Transverse colon (tissue), 4 donors: ENCODE measurements at regions of chr11 and their contacts with region 1.

Region 1: DNA sequence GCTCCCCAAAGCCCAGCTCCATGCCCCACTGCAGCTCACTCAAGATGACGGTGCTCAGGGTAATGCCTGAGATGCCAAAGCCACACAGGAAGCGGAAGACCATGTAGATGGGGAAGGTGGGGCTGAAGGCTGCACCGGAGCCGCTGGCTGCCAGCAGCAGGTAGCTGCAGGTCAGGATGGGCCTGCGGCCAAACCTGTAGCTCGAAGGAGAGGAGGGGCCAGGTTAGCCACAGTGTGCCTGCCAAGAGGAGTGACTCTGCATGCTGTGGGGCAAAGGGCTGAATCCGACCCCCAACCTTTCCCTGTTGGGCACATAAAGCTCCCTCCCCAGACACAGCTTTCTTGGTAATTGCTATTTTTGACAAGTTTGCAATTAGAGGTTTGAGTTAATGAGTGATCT is 14.9 kb upstream of the SLC22A6 start:
- DNase-seq: no peak
- H3K4me3 ChIP-seq: no peak overlapping the region
- H3K27ac ChIP-seq: no peak overlapping the region
- H3K4me1 ChIP-seq: no peaks in the 10 kb centered on the region
- H3K27me3 ChIP-seq: no peaks in the 10 kb centered on the region
- CTCF ChIP-seq: no peak
- EP300 ChIP-seq: no peak
- POLR2A ChIP-seq: no peak

Region 2: DNA sequence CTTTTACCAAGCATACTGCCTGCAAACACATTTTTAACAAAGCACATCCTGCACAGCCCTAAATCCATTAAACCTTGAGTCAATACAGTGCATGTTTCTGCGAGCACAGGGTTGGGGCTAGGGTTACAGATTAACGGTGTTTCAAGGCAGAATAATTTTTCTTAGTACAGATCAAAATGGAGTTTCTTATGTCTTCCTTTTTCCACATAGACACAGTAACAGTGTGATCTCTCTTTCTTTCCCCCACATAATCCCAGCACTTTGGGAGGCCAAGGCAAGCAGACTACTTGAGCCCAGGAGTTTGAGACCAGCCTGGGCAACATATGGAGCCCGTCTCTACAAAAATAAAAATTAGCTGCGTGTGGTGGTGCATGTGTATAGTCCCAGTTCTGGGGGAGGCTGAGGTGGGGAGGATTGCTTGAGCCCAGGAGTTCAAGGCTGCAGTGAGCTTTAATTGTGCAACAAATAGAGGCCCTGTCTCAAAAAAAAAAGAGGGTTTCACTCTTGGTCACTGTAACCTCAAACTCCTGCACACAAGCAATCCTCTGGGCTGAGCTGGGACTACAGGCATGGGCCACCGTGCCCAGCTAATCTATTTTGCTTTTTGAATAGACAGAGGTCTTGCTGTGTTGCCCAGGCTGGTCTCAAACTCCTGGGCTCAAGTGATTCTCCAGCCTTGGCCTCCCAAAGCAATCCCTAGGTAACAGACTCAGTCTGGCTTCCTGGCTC is 138.7 kb before region 1 on chr11:
- in situ Hi-C with region 1: no loop called
- intact Hi-C with region 1: no loop called
- DNase-seq: no peak
- H3K4me3 ChIP-seq: no peak overlapping the region
- H3K27ac ChIP-seq: no peak overlapping the region
- H3K4me1 ChIP-seq: peaks cover 0 to 27% (median 5%) of the 10 kb centered on the region in 4 donors
- H3K27me3 ChIP-seq: no peaks in the 10 kb centered on the region
- CTCF ChIP-seq: no peak
- EP300 ChIP-seq: no peak
- POLR2A ChIP-seq: no peak

Region 3: GRCh38 chr11:62911137-62912130 is 88.2 kb before region 1 on chr11:
- in situ Hi-C with region 1: loop called in 1 of 4 experiments (anchors 10 kb)
- intact Hi-C with region 1: no loop called
- DNase-seq: no peak
- H3K4me3 ChIP-seq: no peak overlapping the region
- H3K27ac ChIP-seq: no peak overlapping the region
- H3K4me1 ChIP-seq: peaks cover 8 to 14% (median 12%) of the 10 kb centered on the region in 4 donors
- H3K27me3 ChIP-seq: no peaks in the 10 kb centered on the region
- CTCF ChIP-seq: no peak
- EP300 ChIP-seq: no peak
- POLR2A ChIP-seq: no peak